Calu3 (cell line): ENCODE measurements at regions of chr7 and their contacts with region 1.

Region 1: DNA sequence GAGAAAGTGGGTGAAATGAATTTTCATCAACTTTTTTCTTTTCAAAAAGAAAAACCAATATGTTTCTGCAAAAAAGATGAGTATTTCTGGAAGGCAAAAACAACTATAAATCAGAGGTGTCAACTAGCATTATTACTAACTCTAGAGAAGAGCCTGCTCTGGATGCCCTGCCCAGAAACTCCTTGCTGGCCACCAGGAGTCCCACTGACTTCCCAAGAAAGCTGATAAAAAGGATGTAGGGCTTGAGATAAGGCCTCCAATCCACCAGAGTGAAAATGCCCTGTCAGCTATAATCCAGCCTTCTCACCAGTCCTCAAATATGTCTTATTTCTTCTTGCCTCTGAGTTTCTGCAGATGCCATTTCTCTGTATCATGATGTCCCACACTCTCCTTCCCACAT is 16.7 kb upstream of the FZD1 start:
- DNase-seq: no peak
- H3K4me3 Mint-ChIP-seq: no peak overlapping the region
- H3K27ac Mint-ChIP-seq: no peak overlapping the region
- H3K4me1 Mint-ChIP-seq: peaks cover 10% of the 10 kb centered on the region
- H3K27me3 Mint-ChIP-seq: no peaks in the 10 kb centered on the region
- CTCF ChIP-seq: no peak

Region 2: DNA sequence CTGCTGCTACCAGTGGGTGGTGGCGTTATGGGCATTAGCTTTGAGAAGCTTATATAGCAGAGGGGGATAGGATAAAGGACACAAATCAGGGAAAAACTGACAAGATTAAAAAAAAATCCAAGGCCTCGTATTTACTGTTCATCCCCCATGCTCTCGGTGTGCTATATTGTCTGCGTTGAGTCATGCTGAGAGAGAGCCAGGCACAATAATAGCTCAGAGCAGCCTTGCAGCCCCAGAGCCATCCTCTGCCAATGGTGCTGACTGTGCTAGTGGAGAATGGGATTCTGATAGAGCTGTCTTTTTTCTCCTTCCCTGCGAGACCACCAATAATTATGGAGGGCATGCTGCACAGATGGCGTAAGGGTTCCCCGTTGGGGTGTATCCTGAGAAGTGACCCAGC is 34.9 kb before region 1 on chr7:
- CTCF ChIA-PET with region 1: interaction called, 10 read pairs
- intact Hi-C with region 1: no loop called
- DNase-seq: no peak
- H3K4me3 Mint-ChIP-seq: no peak overlapping the region
- H3K27ac Mint-ChIP-seq: no peak overlapping the region
- H3K4me1 Mint-ChIP-seq: no peaks in the 10 kb centered on the region
- H3K27me3 Mint-ChIP-seq: no peaks in the 10 kb centered on the region
- CTCF ChIP-seq: no peak